Breast epithelium (tissue), 4 donors: ENCODE measurements at regions of chr13 and their contacts with region 1.

Region 1: DNA sequence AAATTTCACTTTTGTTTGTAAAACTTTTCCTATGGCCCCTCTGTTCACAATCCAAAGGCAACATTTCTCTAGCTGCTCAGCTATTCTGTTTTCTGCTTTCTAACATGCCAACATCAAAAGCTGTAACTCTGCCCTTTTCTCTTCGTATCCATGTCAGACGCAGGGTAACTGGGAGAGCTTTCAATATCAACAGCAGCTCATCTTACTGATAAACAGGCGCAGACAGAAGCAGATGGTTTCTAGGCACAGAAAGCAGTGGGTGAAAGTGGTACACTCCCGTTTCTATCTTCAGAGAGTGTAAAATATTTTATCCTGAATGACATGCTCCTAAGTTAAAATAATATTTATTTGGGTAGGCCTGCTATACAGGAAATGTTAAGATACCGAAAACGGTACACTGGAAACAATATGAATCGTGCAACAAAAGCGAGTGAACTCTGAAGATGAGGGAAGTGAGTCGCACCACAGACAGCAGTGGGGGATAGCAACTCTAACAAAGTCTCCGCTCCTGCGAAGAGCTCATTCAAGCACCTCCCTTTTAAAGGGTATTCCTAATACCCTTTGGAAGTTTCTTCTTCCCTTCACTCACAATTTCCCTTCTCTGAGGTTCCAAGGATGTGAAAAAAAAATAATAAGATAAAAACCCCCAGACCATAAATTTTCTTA is 798.3 kb downstream of the GPC5 start:
- DNase-seq: no peak
- H3K4me3 ChIP-seq: no peak overlapping the region
- H3K27ac ChIP-seq: no peak overlapping the region
- H3K4me1 ChIP-seq: no peaks in the 10 kb centered on the region
- H3K27me3 ChIP-seq: no peaks in the 10 kb centered on the region
- CTCF ChIP-seq: no peak
- POLR2A ChIP-seq: no peak

Region 2: DNA sequence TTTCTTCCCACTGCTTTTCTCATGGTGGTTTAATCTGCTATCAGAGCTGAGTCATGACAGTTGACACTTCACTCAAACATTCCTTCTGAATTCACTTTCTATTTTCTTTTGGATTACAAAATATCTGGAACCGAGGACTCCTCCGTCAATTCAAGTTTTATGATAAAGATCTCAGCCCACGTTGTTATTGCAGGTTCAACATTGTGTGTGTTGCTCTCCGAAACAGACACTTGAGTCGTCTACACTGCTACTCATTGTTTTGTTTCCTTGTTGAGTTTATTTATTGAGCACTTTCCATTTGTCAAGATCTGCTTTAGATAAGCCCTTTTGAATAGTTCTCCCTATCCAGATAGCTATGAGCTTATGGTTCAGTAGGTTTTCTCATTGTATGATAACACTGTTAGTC is 393.8 kb after region 1 on chr13:
- intact Hi-C with region 1: no loop called
- DNase-seq: no peak
- H3K4me3 ChIP-seq: no peak overlapping the region
- H3K27ac ChIP-seq: no peak overlapping the region
- H3K4me1 ChIP-seq: no peaks in the 10 kb centered on the region
- H3K27me3 ChIP-seq: no peaks in the 10 kb centered on the region
- CTCF ChIP-seq: no peak
- POLR2A ChIP-seq: no peak

Region 3: GRCh38 chr13:94192431-94192975 is 1995.8 kb after region 1 on chr13:
- intact Hi-C with region 1: loop called (anchors 10 kb)
- DNase-seq: no peak
- H3K4me3 ChIP-seq: no peak overlapping the region
- H3K27ac ChIP-seq: no peak overlapping the region
- H3K4me1 ChIP-seq: no peaks in the 10 kb centered on the region
- H3K27me3 ChIP-seq: no peaks in the 10 kb centered on the region
- CTCF ChIP-seq: peak in 1 of 3 donors; percentile 11
- POLR2A ChIP-seq: no peak